Heart right ventricle (tissue), 16 donors: ENCODE measurements at regions of chr5 and their contacts with region 1.

Region 1: GRCh38 chr5:112146323-112147226 is 272.5 kb downstream of the EPB41L4A start:
- DNase-seq: peak in 1 of 2 donors; percentile 79
- ATAC-seq: peak; percentile 80 to 94 (median 88)
- H3K4me3 ChIP-seq: no peak overlapping the region
- H3K27ac ChIP-seq: peak overlapping the region in 6 of 10 donors; percentile 2 to 61 (median 34)
- H3K4me1 ChIP-seq: peaks cover 0 to 30% (median 24%) of the 10 kb centered on the region in 9 donors
- H3K27me3 ChIP-seq: no peaks in the 10 kb centered on the region
- CTCF ChIP-seq: peak; percentile 81 to 93 (median 89)

Region 2: DNA sequence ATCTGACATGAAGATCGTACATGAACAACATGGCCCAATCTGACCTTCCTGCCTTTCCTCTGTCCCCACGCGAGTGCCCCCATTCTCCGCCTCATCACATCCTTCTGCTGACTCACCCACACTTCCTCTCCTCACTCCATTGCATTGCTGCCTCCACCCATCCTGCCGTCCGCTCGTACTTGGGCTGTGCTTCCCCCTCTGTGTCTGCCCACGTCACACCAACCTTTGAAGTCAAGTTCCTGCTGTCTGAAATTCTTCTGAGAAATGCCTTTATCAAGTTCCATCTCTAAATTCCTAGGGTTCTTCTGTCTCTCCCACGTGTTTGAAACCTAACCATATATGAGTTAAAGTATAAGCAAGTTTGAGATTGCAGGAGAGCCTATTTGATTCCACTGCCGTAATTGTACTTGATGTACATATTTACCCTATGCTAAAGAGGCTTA is 616.3 kb before region 1 on chr5:
- intact Hi-C with region 1: loop called in 9 of 10 experiments (anchors 2 to 5 kb)
- DNase-seq: peak; percentile 60 to 82
- ATAC-seq: peak; percentile 92 to 100 (median 98)
- H3K4me3 ChIP-seq: no peak overlapping the region
- H3K27ac ChIP-seq: peak overlapping the region in 9 of 10 donors; percentile 24 to 81 (median 64)
- H3K4me1 ChIP-seq: peaks cover 0 to 39% (median 0%) of the 10 kb centered on the region in 9 donors
- H3K27me3 ChIP-seq: no peaks in the 10 kb centered on the region
- CTCF ChIP-seq: no peak

Region 3: GRCh38 chr5:111680737-111681413 is 465.7 kb before region 1 on chr5:
- intact Hi-C with region 1: loop called in 1 of 10 experiments (anchors 10 kb)
- DNase-seq: peak; percentile 14 to 88
- ATAC-seq: peak; percentile 80 to 93 (median 86)
- H3K4me3 ChIP-seq: peak overlapping the region in 4 of 10 donors; percentile 5 to 32 (median 20)
- H3K27ac ChIP-seq: peak overlapping the region in 9 of 10 donors; percentile 23 to 80 (median 67)
- H3K4me1 ChIP-seq: peaks cover 0 to 52% (median 32%) of the 10 kb centered on the region in 9 donors
- H3K27me3 ChIP-seq: no peaks in the 10 kb centered on the region
- CTCF ChIP-seq: no peak

Region 4: GRCh38 chr5:111830333-111830732 is 316.2 kb before region 1 on chr5:
- intact Hi-C with region 1: loop called in 1 of 10 experiments (anchors 10 kb)
- DNase-seq: no peak
- ATAC-seq: no peak
- H3K4me3 ChIP-seq: no peak overlapping the region
- H3K27ac ChIP-seq: no peak overlapping the region
- H3K4me1 ChIP-seq: peaks cover 0 to 5% (median 0%) of the 10 kb centered on the region in 9 donors
- H3K27me3 ChIP-seq: no peaks in the 10 kb centered on the region
- CTCF ChIP-seq: no peak

Region 5: DNA sequence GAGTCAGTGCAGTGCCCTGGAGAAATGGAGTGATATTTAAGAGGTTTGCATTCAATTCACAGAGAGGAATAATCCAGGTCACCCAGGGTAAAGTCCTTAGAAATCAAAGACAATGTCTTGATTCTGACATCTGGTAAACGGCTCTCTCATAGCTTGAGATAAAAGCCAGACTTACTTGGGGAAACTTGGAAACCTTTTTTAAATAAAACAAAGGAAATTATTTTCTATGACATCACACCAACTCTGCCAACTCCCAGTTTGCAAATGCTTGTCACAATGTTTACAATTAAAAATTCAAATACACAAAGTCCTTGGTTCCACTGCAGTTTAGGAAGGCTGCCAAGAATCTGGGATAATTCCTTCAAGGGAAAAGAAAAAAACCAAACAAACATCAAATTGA is 134.5 kb before region 1 on chr5:
- intact Hi-C with region 1: loop called in 1 of 10 experiments (anchors 10 kb)
- DNase-seq: peak in 1 of 2 donors; percentile 52
- ATAC-seq: peak in 7 of 8 donors; percentile 55 to 93 (median 82)
- H3K4me3 ChIP-seq: no peak overlapping the region
- H3K27ac ChIP-seq: peak overlapping the region in 4 of 10 donors; percentile 45 to 63 (median 54)
- H3K4me1 ChIP-seq: peaks cover 0 to 42% (median 19%) of the 10 kb centered on the region in 9 donors
- H3K27me3 ChIP-seq: no peaks in the 10 kb centered on the region
- CTCF ChIP-seq: no peak

Region 6: DNA sequence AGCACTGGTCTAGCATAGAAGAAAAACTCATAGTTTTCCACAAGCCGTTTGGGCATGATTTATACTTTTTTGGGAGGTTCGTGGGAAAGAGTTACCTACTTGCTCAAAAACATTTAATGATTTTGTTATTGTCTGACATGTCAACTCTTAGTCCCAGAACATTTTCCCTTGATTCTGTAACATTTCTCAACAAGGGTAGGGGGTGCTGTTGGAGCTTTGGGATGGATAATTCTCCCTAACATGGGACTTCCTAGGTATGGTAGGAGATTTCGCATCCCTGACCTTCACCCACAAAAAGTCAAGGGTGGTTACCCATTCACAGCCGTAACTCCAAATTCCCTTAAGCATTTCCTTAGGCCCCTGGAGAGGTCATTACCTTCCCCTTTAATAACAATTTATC is 1744.9 kb after region 1 on chr5:
- intact Hi-C with region 1: no loop called
- DNase-seq: no peak
- ATAC-seq: no peak
- H3K4me3 ChIP-seq: no peak overlapping the region
- H3K27ac ChIP-seq: no peak overlapping the region
- H3K4me1 ChIP-seq: no peaks in the 10 kb centered on the region
- H3K27me3 ChIP-seq: peaks cover 0 to 4% (median 0%) of the 10 kb centered on the region in 7 donors
- CTCF ChIP-seq: no peak